ENCODE measurements at regions of chr1 and their contacts with region 1.

Region 1: GRCh38 chr1:204162231-204163074 is 3.7 kb downstream of the REN start:
- DNase-seq: peak; percentile 86
- ATAC-seq: peak; percentile 92 to 93
- H3K4me3 ChIP-seq: no peak overlapping the region
- H3K27ac ChIP-seq: peak overlapping the region; percentile 46
- H3K4me1 ChIP-seq: peaks cover 9% of the 10 kb centered on the region
- H3K27me3 ChIP-seq: no peaks in the 10 kb centered on the region
- CTCF ChIP-seq: peak; percentile 100

Region 2: DNA sequence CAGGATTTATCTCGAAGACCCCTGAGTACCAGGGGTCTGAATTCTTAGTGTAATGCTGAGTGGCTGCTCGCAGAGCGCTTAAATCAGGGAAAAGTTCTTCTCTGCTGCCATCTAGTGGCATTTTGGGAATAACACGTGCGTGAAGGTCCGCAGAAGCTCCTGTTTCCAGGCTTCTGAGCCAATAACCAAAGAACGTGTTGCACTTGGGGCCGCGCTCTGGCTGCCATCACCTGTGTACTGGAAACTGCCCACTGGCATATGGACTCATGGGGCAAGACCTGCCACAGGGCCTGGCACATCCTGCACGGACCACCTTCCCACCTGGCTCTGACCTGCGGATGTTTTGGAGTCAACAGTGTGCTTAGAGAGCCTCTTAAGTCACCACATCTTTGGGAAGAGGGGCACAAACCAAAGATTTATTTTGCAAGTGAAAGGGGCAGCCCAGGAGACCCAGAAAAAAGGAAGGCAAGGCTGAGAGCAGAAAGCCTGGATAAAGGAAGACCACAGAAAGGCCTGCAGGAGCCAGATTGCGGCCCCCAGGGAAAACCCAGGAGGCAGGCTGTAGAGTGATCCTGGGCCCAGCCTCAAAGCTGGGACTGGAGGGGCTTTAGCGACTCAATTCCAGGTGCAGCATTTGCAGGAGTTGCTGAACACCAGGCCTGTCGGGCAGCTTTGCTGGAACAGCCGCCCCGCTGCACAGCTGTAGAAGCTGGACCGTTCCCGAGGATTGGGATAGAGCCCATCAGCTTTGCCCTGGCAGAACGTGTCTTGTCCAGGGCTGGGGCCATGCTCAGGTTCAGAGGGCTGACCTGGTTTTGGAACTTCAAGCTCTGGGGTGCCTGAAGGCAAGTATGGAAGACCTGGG is 945.9 kb before region 1 on chr1:
- intact Hi-C with region 1: no loop called
- DNase-seq: no peak
- ATAC-seq: peak; percentile 56 to 79
- H3K4me3 ChIP-seq: no peak overlapping the region
- H3K27ac ChIP-seq: no peak overlapping the region
- H3K4me1 ChIP-seq: peaks cover 7% of the 10 kb centered on the region
- H3K27me3 ChIP-seq: peaks cover 10% of the 10 kb centered on the region
- CTCF ChIP-seq: peak; percentile 82

Region 3: GRCh38 chr1:203888807-203889251 is 273.6 kb before region 1 on chr1:
- intact Hi-C with region 1: no loop called
- DNase-seq: no peak
- ATAC-seq: no peak
- H3K4me3 ChIP-seq: no peak overlapping the region
- H3K27ac ChIP-seq: no peak overlapping the region
- H3K4me1 ChIP-seq: no peaks in the 10 kb centered on the region
- H3K27me3 ChIP-seq: no peaks in the 10 kb centered on the region
- CTCF ChIP-seq: no peak

Region 4: DNA sequence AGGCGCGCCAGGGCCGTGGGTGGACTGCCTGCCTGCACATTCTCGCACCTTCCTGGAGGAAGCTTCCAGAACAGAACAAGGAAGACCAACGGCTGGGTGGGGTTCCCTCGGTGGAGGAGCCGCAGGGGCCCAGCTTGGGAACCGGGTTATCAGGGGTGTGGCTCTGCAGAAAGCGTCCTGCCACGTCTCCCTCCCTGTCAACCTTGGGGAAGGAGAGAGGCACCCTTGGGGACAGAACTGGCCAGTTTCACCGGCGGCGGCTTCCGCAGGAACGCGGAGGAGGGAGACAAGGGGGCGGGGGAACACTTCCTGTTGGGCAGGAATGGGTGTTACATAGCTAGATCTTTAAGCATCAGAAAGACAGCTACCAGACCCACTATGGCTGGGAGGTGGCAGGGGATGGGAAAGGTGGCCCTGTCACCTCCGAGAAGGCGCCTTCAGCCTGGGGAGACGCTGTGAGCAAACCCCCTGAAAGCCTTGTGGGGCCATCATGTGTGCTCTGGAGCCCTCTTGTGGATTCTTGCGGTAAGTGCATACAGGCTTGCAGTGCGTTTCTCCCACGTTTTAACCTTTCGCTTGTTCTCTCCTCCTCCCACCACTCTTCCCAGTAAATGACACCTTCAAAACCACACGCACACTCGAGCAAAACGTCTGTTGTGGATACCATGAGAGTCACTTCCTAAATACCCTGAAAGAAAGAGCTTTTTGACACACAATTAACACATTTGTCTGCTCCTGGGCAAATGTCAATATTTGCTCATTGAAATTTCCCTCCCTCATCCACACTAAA is 201.1 kb after region 1 on chr1:
- intact Hi-C with region 1: loop called (anchors 10 kb)
- DNase-seq: peak; percentile 75
- ATAC-seq: peak; percentile 90 to 91
- H3K4me3 ChIP-seq: peak overlapping the region; percentile 60
- H3K27ac ChIP-seq: peak overlapping the region; percentile 37
- H3K4me1 ChIP-seq: peaks cover 18% of the 10 kb centered on the region
- H3K27me3 ChIP-seq: peaks cover 10% of the 10 kb centered on the region
- CTCF ChIP-seq: peak; percentile 95

Region 5: GRCh38 chr1:204446370-204447111 is 284.1 kb after region 1 on chr1:
- intact Hi-C with region 1: no loop called
- DNase-seq: peak; percentile 76
- ATAC-seq: peak; percentile 73 to 77
- H3K4me3 ChIP-seq: no peak overlapping the region
- H3K27ac ChIP-seq: no peak overlapping the region
- H3K4me1 ChIP-seq: peaks cover 44% of the 10 kb centered on the region
- H3K27me3 ChIP-seq: no peaks in the 10 kb centered on the region
- CTCF ChIP-seq: peak; percentile 85

Measured in lower lobe of right lung (tissue), 2 donors.